ENCODE measurements at regions of chr9 and their contacts with region 1.

Region 1: DNA sequence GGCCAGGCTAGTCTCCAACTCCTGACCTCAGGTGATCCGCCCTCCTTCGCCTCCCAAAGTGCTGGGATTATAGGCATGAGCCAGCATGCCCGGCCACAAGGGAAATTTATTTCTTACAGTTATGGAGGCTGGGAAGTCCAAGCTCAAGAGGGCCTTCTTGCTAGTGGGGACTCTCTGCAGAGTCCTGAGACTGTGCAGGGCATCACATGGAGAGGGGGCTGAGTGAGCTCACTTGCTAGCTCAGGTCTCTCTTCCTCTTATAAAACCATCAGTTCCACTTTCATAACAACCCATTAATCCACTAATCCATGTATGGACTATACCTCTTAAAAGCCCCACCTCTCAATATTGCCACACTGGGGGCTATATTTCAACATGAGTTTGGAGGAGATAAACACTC is 5.1 kb upstream of the SPIN1 start:
- DNase-seq: no peak
- H3K4me3 ChIP-seq: no peak overlapping the region
- H3K27ac ChIP-seq: no peak overlapping the region
- H3K4me1 ChIP-seq: peaks cover 9 to 13% (median 11%) of the 10 kb centered on the region in 4 donors
- H3K27me3 ChIP-seq: no peaks in the 10 kb centered on the region
- CTCF ChIP-seq: no peak
- EP300 ChIP-seq: no peak
- POLR2A ChIP-seq: no peak

Region 2: DNA sequence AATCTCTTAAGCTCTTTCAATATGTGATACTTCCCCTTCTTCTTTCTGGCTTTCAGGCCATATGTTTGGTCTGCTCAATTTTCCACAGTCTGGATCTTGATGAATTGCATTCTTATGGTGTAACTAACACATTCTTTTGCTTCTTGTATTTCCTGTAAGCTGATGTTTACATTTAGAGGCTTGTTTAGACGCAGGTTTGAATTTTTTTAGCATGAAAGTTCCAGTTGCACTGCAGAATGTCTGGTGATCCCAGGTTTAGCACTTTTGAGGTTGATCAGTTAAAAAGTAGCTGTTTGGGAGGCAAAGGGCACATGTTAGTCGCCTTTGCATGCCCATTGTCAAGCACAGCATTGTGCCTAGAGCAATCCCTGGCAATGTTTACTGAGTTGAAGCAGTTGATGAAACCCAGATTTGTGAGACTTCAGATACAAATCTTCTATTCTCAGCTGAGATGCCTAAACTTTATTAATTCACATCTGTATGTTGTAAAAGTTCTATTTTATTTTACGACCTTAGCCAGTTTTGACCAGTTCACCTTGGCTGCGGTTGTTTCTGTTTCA is 185.3 kb before region 1 on chr9:
- intact Hi-C with region 1: loop called (anchors 5 kb)
- DNase-seq: peak; percentile 29
- H3K4me3 ChIP-seq: peak overlapping the region; percentile 33 to 55 (median 42)
- H3K27ac ChIP-seq: peak overlapping the region; percentile 38 to 62 (median 58)
- H3K4me1 ChIP-seq: peaks cover 13 to 35% (median 27%) of the 10 kb centered on the region in 4 donors
- H3K27me3 ChIP-seq: no peaks in the 10 kb centered on the region
- CTCF ChIP-seq: no peak
- EP300 ChIP-seq: no peak
- POLR2A ChIP-seq: no peak

Region 3: DNA sequence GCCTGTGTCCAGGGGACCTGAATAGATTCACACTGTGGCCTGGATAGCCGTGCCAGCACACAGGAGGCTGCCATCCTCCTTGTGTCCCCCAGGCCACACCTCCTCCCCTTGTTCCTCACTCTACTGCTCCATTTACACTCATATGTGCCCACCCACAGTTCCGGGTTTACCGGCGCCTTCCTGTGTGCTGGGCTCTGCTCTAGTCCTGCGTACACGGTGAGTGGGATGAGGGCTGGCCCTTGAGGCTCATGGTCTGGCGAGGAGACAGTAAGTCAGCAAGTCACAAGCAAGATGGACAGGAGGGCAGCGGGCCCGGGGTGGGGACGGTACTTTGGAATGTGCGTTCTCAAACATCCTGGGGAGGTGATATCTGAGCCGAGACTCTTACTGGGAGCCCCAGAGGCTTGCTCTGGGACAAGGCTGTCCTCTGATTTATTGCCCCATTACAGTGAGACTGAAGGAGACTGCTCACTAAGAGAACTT is 119.4 kb after region 1 on chr9:
- intact Hi-C with region 1: no loop called
- DNase-seq: no peak
- H3K4me3 ChIP-seq: no peak overlapping the region
- H3K27ac ChIP-seq: no peak overlapping the region
- H3K4me1 ChIP-seq: no peaks in the 10 kb centered on the region
- H3K27me3 ChIP-seq: no peaks in the 10 kb centered on the region
- CTCF ChIP-seq: no peak
- EP300 ChIP-seq: no peak
- POLR2A ChIP-seq: no peak